ENCODE measurements at regions of chr7 and their contacts with region 1.

Region 1: GRCh38 chr7:157432957-157433576 is 96.3 kb downstream of the DNAJB6 start:
- DNase-seq: no peak
- ATAC-seq: peak; percentile 49 to 63

Region 2: DNA sequence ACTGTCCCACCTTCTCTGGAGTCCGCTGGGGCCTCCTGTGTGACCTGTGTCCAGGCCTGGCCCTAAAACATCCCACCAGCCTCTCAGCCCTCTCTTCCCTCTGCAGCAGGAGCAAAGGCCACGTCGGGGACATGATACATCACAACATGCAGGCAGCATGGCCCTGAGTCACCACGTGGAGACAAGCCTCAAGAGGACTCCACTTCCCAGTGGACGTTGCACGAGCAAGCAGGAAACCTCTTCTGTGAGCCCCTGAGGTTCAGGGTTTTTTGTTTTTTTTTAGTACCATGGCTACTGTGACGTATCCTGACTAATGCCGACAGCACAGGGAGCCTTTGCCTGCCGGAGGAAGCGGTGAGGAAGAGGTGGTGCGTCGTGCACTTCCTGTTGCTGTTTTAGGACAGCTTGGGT is 69.6 kb after region 1 on chr7:
- intact Hi-C with region 1: no loop called
- DNase-seq: no peak
- ATAC-seq: peak in 1 of 2 donors; percentile 65

Region 3: GRCh38 chr7:157875230-157876179 is 442.4 kb after region 1 on chr7:
- intact Hi-C with region 1: loop called (anchors 2 to 10 kb)
- DNase-seq: peak; percentile 51
- ATAC-seq: peak in 1 of 2 donors; percentile 55